ENCODE measurements at regions of chr6 and their contacts with region 1.

Region 1: DNA sequence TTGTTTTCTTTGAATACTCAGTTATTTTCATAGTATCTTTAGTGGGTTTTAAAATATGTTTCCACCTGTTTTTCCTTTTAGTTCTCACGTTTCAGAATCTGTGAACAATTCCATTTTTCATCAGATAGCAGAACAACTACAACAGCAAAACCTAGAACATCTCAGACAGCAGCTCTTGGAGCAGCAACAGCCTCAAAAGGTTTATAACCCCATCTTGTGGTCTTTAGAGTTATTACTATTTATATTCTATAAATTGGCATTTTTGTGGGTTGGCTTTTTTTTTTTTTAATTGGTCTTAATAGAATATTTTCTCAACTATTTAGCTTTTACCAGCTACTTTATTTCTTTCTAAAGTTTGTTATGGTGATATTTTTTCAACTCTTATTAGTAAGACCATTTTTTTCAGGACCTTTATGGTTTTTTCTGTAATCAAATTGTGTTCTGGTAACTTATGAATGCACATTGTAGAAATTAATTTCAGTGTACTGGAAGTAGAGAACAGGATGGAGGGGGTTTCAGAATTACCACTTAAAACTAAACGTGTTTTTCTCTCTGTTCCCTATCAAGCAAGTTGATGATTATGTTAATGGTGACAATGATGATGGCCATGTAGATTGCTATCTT is 72.2 kb downstream of the SCAF8 start:
- DNase-seq: no peak
- H3K4me3 ChIP-seq: no peak overlapping the region
- H3K27ac ChIP-seq: no peak overlapping the region
- H3K4me1 ChIP-seq: no peaks in the 10 kb centered on the region
- H3K27me3 ChIP-seq: no peaks in the 10 kb centered on the region
- CTCF ChIP-seq: peak in 4 of 6 experiments; percentile 29 to 45 (median 42)
- POLR2A ChIP-seq: no peak

Region 2: DNA sequence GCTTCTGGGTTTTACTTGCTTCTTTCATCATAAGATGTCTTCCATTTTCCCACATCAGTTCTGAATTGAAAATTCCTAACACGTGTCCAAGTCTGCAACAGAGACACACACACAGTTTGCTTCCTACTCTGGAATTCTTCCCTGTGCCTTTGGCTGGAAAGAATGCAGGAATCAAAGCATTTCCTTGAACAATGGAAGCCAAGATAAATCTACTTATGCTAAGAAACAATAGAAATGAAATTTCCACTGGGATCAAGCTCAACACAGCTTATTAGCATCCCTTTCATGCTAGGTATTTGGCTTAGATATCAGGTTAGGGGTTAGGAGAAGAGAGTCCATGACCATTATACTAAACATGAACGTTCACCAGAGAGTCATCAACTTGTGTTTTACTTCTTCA is 173.3 kb before region 1 on chr6:
- intact Hi-C with region 1: no loop called
- DNase-seq: no peak
- H3K4me3 ChIP-seq: no peak overlapping the region
- H3K27ac ChIP-seq: no peak overlapping the region
- H3K4me1 ChIP-seq: no peaks in the 10 kb centered on the region
- H3K27me3 ChIP-seq: no peaks in the 10 kb centered on the region
- CTCF ChIP-seq: no peak
- POLR2A ChIP-seq: no peak

Region 3: DNA sequence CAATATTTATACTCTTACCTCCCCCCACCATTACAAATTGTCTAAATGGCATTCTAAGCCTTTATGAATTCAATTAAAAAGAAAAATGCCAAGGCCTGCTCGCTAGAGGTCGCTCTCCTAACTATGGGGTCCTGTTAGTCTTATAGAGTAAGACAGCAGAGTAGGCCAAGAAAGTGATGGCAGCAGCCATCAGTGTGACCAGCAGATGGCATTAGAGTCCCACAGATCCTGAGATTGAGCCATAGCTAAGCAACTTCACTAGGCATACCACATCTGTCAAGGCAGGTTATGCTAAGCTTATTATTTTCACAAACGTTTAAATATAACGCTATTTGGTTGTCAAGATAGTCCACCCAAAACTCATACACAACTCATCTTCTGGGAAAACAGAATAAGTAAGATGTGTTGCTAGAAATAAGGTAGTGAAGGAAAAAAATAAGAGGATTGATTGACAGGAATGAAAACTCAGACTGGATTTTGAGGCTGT is 129.8 kb before region 1 on chr6:
- intact Hi-C with region 1: loop called (anchors 10 kb)
- DNase-seq: peak; percentile 61
- H3K4me3 ChIP-seq: no peak overlapping the region
- H3K27ac ChIP-seq: no peak overlapping the region
- H3K4me1 ChIP-seq: no peaks in the 10 kb centered on the region
- H3K27me3 ChIP-seq: no peaks in the 10 kb centered on the region
- CTCF ChIP-seq: peak; percentile 90 to 99 (median 98)
- POLR2A ChIP-seq: no peak

Region 4: DNA sequence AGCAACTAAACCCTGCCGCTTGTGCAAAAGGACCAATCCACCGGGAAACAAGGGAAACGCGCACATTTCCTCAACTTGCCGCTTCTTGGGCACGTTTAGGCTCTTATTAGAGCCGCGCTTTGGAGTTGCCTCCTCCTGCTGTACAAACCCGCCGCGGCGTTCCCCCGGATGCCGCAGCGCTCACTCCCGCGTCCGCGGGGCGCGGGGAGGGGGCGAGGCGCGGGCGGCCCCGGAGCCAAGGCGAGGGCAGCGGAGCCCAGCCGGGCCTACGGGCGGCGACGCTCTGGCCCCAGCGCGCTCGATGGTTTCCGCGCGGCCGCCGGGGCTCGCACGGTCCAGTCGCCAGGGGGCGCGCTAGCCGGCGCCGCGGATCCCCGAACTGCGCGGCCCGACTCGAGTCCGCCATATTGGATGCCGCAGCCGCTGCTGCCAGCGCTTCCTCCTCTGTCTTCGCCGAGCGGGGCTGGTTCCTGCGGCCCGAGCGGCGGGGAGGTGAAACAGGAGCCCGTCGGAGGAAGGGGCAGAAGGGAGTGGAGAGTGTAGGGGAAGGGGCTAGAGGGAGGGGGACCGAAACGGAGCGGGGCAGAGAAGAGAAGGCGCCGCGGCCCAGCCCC is 72.3 kb before region 1 on chr6 and contains the start of gene SCAF8:
- intact Hi-C with region 1: loop called (anchors 10 kb)
- DNase-seq: peak; percentile 28
- H3K4me3 ChIP-seq: peak within 1 kb of the TSS; percentile 78 to 95 (median 90)
- H3K27ac ChIP-seq: peak within 1 kb of the TSS; percentile 98 to 100 (median 100)
- H3K4me1 ChIP-seq: peaks cover 11 to 47% (median 40%) of the 10 kb centered on the region in 3 donors
- H3K27me3 ChIP-seq: no peaks in the 10 kb centered on the region
- CTCF ChIP-seq: peak; percentile 58 to 97 (median 92)
- POLR2A ChIP-seq: peak in 2 of 4 donors; percentile 36 to 49
- total RNA-seq, gene SCAF8: 14.8 to 31.3 (median 20.5) TPM